Common myeloid progenitor, CD34-positive (primary cell): ENCODE measurements at regions of chr1 and their contacts with region 1.

Region 1: GRCh38 chr1:51897699-51898031 is 19.1 kb upstream of the NRDC start:
- DNase-seq: no peak
- H3K4me3 ChIP-seq: no peak overlapping the region
- H3K27ac ChIP-seq: no peak overlapping the region
- H3K4me1 ChIP-seq: no peaks in the 10 kb centered on the region
- H3K27me3 ChIP-seq: peaks cover 0 to 31% (median 6%) of the 10 kb centered on the region in 5 experiments

Region 2: DNA sequence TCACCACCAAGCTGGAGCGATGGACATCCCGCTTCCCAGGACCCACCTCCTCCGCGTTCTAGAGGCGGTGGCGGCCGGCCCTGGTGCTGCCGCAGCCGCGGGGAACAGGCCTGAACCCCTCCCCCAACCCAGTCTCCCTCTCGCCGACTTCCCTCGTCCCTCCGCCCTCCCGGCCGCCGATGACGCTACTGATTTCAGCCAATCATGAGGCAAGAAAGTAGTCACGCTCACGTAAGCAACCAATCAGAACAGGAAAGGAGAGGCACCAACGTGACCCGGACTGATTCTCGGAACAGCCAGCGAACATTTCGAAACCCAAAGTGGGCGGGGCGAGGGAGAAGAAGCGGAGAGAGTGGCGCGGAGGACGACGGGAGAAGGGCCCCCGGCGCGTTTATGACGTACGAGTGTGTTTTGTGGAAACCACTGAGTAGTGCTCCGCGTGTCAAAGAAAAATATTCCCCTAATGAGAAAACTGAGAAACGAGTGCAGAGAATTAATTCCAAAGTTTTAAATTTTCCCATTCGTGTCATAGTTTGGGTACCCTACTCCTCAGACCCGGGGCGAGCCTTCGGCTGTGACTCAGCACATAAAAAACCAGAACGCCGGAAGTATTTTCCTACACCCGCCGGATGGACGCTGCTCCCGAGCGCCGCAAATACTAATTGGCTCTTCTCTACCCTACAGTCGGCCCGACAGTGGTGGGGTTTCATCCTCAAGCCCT is 18.9 kb before region 1 on chr1 and contains the start of gene NRDC:
- CTCF ChIA-PET with region 1: interaction called, 10 read pairs
- POLR2A ChIA-PET with region 1: no interaction called
- DNase-seq: peak; percentile 100
- H3K4me3 ChIP-seq: peak within 1 kb of the TSS; percentile 87 to 100 (median 95)
- H3K27ac ChIP-seq: peak within 1 kb of the TSS; percentile 98 to 99
- H3K4me1 ChIP-seq: peaks cover 18 to 43% (median 25%) of the 10 kb centered on the region in 4 experiments
- H3K27me3 ChIP-seq: peaks cover 0 to 2% (median 0%) of the 10 kb centered on the region in 5 experiments

Region 3: DNA sequence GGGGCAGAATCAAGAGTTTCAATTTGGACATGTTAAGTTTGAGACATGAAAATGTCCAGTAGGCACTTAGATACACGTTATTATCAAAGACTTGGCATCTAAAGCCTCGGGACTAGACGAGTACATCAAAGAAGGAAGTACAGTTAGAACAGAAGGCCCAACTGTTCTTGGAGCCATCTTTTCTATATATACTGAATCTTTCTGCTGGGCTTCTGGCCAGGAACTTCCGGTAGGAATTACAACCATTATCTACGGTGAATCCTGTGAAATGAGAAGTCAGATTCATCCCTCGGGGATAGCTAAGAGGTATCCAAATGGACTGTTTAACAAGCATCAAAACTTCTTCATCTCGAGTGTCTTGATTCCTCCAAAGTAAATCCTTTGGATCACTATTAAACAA is 15.2 kb after region 1 on chr1:
- CTCF ChIA-PET with region 1: interaction called, 11 read pairs
- POLR2A ChIA-PET with region 1: no interaction called
- DNase-seq: no peak
- H3K4me3 ChIP-seq: no peak overlapping the region
- H3K27ac ChIP-seq: no peak overlapping the region
- H3K4me1 ChIP-seq: no peaks in the 10 kb centered on the region
- H3K27me3 ChIP-seq: peaks cover 0 to 12% (median 6%) of the 10 kb centered on the region in 5 experiments

Region 4: GRCh38 chr1:52002038-52002917 is 104.6 kb after region 1 on chr1:
- CTCF ChIA-PET with region 1: interaction called, 60 read pairs
- POLR2A ChIA-PET with region 1: no interaction called
- DNase-seq: peak; percentile 83 to 93 (median 88)
- H3K4me3 ChIP-seq: no peak overlapping the region
- H3K27ac ChIP-seq: no peak overlapping the region
- H3K4me1 ChIP-seq: no peaks in the 10 kb centered on the region
- H3K27me3 ChIP-seq: peaks cover 4 to 14% (median 9%) of the 10 kb centered on the region in 5 experiments